Motor neuron (in vitro differentiated cells): ENCODE measurements at regions of chr1 and their contacts with region 1.

Region 1: GRCh38 chr1:235504496-235505222 is 407 bp upstream of the B3GALNT2 start:
- ATAC-seq: peak; percentile 77 to 91 (median 87)
- H3K4me3 ChIP-seq: peak overlapping the region; percentile 59 to 86 (median 69)
- H3K27ac ChIP-seq: peak overlapping the region; percentile 90 to 94
- H3K4me1 ChIP-seq: peaks cover 0 to 9% of the 10 kb centered on the region in 2 donors

Region 2: GRCh38 chr1:235317168-235317567 is 187.5 kb before region 1 on chr1:
- in situ Hi-C with region 1: no loop called
- ATAC-seq: no peak
- H3K4me3 ChIP-seq: no peak overlapping the region
- H3K27ac ChIP-seq: no peak overlapping the region
- H3K4me1 ChIP-seq: peaks cover 0 to 6% of the 10 kb centered on the region in 2 donors

Region 3: GRCh38 chr1:235783148-235783776 is 278.6 kb after region 1 on chr1:
- in situ Hi-C with region 1: loop called in 4 of 9 experiments (anchors 25 kb)
- ATAC-seq: peak in 3 of 8 experiments; percentile 37 to 50 (median 47)
- H3K4me3 ChIP-seq: no peak overlapping the region
- H3K27ac ChIP-seq: no peak overlapping the region
- H3K4me1 ChIP-seq: no peaks in the 10 kb centered on the region